GM10248 (cell line): ENCODE measurements at regions of chr17 and their contacts with region 1.

Region 1: DNA sequence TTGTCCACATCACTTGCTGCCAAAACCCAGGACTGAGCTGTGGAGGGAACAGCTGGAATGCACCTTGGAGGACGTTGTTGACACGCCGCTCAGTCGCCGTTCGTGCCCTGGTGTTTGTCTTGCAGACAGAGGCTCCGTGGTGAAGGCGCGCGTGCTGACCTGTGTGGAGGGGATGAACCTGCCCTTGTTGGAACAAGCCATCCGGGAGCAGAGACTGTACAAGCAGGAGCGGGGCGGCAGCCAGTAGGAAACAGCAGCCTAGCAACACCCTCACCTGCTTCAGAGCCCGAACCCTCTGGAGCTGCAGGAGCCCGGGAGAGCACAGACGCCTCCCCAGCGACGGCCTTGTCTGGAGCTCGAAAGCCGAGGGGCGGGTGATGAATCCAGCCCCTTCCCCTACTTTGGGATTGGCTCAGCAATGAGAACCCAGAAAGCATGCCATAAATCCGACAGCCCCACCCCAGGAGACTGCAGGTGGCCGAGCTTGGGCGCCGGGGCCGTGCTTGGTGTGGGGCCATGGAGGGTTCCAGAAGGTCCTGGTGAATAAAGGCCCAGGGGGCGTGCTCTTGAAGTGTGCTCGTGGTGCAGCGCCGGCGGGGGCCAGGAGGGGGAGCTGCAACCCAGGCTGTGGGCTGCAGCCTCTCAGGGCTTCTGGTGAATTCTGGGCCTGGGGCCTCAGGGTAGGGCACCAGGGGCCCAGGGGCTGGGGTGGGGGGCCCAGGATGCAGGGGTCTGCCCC is 470 bp upstream of the CDK3 start:
- DNase-seq: peak; percentile 81
- CTCF ChIP-seq: peak; percentile 84

Region 2: DNA sequence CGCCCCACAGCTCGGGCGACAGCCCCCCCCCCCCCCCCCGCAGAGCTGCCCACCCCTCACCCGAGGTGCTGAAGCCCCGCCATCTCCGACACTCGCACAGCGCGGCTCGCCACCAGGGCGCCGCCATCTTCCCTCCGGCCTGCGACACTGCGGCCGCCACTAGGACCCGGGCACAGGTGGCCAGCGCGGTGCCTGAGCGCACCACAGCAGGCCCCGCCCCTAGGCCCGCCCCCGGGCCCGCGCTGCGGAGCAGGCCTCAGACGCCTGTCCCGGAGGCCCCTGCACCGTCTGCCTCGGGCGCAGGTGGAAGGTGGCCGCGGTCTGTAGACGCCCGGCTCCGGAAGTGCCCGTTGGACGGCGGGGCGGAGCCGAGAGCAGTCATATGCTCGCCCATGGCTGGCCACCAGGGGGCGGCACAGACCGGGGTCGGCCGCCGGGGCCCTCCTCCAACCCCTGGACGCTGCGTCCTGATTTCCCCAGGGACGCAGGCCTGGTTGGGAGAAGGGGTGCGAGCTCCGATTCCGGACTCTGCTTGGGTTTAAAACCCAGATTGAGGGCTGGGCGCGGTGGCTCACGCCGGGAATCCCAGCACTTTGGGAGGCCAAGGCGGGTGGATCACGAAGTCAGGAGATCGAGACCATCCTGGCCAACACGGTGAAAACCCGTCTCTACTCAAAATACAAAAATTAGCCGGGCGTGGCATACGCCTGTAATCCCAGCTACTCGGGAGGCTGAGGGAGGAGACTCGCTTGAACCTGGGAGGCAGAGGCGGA is 95.2 kb before region 1 on chr17 and contains the start of gene MRPL38:
- CTCF ChIA-PET with region 1: interaction called, 239 read pairs
- POLR2A ChIA-PET with region 1: no interaction called
- DNase-seq: peak; percentile 99
- CTCF ChIP-seq: peak; percentile 87

Region 3: GRCh38 chr17:75983531-75984181 is 16.5 kb before region 1 on chr17:
- CTCF ChIA-PET with region 1: interaction called, 25 read pairs
- POLR2A ChIA-PET with region 1: interaction called, 4 read pairs
- DNase-seq: no peak
- CTCF ChIP-seq: no peak